ENCODE measurements at regions of chr12 and their contacts with region 1.

Region 1: GRCh38 chr12:20212658-20213555 is 155.4 kb upstream of the PDE3A start:
- DNase-seq: peak; percentile 99
- H3K4me3 ChIP-seq: peak overlapping the region in 1 of 3 experiments; percentile 15
- H3K27ac ChIP-seq: peak overlapping the region; percentile 77
- H3K4me1 ChIP-seq: peaks cover 12% of the 10 kb centered on the region
- H3K27me3 ChIP-seq: no peaks in the 10 kb centered on the region
- CTCF ChIP-seq: no peak
- POLR2A ChIP-seq: no peak

Region 2: GRCh38 chr12:19994970-19995369 is 217.9 kb before region 1 on chr12:
- CTCF ChIA-PET with region 1: no interaction called
- POLR2A ChIA-PET with region 1: no interaction called
- dilution Hi-C with region 1: no loop called
- intact Hi-C with region 1: loop called (anchors 2 kb)
- DNase-seq: peak; percentile 63
- H3K4me3 ChIP-seq: no peak overlapping the region
- H3K27ac ChIP-seq: no peak overlapping the region
- H3K4me1 ChIP-seq: peaks cover 20% of the 10 kb centered on the region
- H3K27me3 ChIP-seq: no peaks in the 10 kb centered on the region
- CTCF ChIP-seq: peak in 1 of 2 donors; percentile 10
- POLR2A ChIP-seq: no peak

Region 3: GRCh38 chr12:20154060-20154459 is 58.8 kb before region 1 on chr12:
- CTCF ChIA-PET with region 1: no interaction called
- POLR2A ChIA-PET with region 1: no interaction called
- dilution Hi-C with region 1: no loop called
- intact Hi-C with region 1: loop called (anchors 1 kb)
- DNase-seq: no peak
- H3K4me3 ChIP-seq: no peak overlapping the region
- H3K27ac ChIP-seq: no peak overlapping the region
- H3K4me1 ChIP-seq: peaks cover 8% of the 10 kb centered on the region
- H3K27me3 ChIP-seq: no peaks in the 10 kb centered on the region
- CTCF ChIP-seq: no peak
- POLR2A ChIP-seq: no peak

Region 4: GRCh38 chr12:20183563-20183962 is 29.3 kb before region 1 on chr12:
- CTCF ChIA-PET with region 1: interaction called, 11 read pairs
- POLR2A ChIA-PET with region 1: no interaction called
- dilution Hi-C with region 1: no loop called
- intact Hi-C with region 1: no loop called
- DNase-seq: peak; percentile 59
- H3K4me3 ChIP-seq: no peak overlapping the region
- H3K27ac ChIP-seq: no peak overlapping the region
- H3K4me1 ChIP-seq: peaks cover 16% of the 10 kb centered on the region
- H3K27me3 ChIP-seq: no peaks in the 10 kb centered on the region
- CTCF ChIP-seq: no peak
- POLR2A ChIP-seq: no peak

Region 5: GRCh38 chr12:20232931-20233675 is 20.2 kb after region 1 on chr12:
- CTCF ChIA-PET with region 1: no interaction called
- POLR2A ChIA-PET with region 1: no interaction called
- dilution Hi-C with region 1: no loop called
- intact Hi-C with region 1: no loop called
- DNase-seq: no peak
- H3K4me3 ChIP-seq: no peak overlapping the region
- H3K27ac ChIP-seq: no peak overlapping the region
- H3K4me1 ChIP-seq: no peaks in the 10 kb centered on the region
- H3K27me3 ChIP-seq: no peaks in the 10 kb centered on the region
- CTCF ChIP-seq: no peak
- POLR2A ChIP-seq: no peak

Region 6: GRCh38 chr12:20657496-20657895 is 444.6 kb after region 1 on chr12:
- CTCF ChIA-PET with region 1: no interaction called
- POLR2A ChIA-PET with region 1: no interaction called
- dilution Hi-C with region 1: no loop called
- intact Hi-C with region 1: no loop called
- DNase-seq: no peak
- H3K4me3 ChIP-seq: no peak overlapping the region
- H3K27ac ChIP-seq: no peak overlapping the region
- H3K4me1 ChIP-seq: no peaks in the 10 kb centered on the region
- H3K27me3 ChIP-seq: no peaks in the 10 kb centered on the region
- CTCF ChIP-seq: no peak
- POLR2A ChIP-seq: no peak

Measured in endothelial cell of umbilical vein (primary cell).